ENCODE measurements at regions of chr15 and their contacts with region 1.

Region 1: DNA sequence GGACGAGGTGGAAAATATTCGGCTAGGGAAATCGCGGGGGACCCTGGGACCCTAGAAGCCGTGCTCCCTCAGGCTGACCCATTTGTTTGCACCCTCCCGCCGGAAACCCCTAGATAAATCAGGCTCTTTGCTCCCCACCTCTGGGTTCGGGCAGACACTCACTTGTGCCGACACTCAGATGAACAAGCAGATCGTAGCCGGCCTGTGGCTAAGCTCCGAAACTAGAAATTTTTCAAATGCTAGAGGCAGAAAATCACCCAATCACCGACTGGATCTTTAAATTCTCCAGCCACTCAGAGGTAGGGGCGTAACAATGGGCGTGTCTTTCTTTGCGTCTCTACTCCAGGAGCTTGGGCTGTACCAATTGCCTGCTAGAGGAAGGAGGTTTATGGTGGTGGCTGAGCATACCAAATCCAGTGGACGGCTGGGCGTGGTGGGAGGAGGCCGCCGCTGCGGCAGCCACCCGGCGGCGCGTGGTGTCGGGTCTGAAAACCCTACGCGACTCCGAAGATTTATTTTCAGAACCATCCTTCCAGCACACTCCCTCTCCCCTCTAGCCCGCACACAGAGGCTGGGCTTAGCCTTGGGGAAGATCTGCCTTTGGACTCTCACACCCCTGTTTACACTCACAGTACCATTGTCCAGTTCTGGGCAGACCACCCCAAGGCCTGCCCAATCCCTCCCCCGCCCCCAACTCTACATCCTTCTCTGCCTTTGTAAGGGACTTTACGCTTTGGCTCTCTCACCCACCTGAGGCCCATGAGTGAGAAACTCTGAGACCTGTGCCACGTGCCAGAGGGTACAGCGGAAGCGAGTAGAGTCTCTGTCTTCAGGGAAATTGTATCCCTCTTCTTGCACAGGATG is at the start of gene PIF1:
- DNase-seq: peak; percentile 93
- H3K4me3 Mint-ChIP-seq: peak within 1 kb of the TSS; percentile 82
- H3K27ac Mint-ChIP-seq: peak within 1 kb of the TSS; percentile 56
- H3K4me1 Mint-ChIP-seq: peaks cover 24% of the 10 kb centered on the region
- H3K27me3 Mint-ChIP-seq: peaks cover 4% of the 10 kb centered on the region
- total RNA-seq, gene PIF1: 23.6 to 30.2 TPM

Region 2: DNA sequence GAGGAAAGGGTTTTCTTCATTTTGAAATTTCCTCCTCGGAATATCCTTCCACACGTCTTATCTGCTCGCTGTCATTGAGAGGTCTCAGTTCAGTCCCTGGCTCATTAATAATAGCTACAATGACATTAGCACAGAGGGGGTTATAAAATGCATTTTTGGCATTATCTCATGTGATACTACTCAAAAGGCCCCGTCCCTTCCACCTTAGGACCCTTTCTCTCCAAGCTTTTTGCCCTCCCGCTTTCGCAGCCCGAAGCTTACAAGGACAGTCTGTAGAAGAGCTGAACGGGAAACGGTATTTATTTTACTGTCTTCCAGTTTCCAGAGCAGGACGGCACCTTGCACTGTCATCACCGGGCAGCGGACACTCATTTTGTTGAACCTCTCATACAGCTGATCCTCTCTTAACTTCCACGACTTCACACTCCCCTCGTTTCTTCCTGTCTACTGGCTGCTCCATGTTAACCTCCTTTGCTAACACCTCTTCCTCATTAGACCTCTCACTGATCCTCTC is 10.4 kb after region 1 on chr15:
- CTCF ChIA-PET with region 1: interaction called, 24 read pairs
- POLR2A ChIA-PET with region 1: interaction called, 6 read pairs
- intact Hi-C with region 1: loop called (anchors 1 kb)
- DNase-seq: no peak
- H3K4me3 Mint-ChIP-seq: peak overlapping the region; percentile 59
- H3K27ac Mint-ChIP-seq: peak overlapping the region; percentile 59
- H3K4me1 Mint-ChIP-seq: peaks cover 40% of the 10 kb centered on the region
- H3K27me3 Mint-ChIP-seq: no peaks in the 10 kb centered on the region

Region 3: DNA sequence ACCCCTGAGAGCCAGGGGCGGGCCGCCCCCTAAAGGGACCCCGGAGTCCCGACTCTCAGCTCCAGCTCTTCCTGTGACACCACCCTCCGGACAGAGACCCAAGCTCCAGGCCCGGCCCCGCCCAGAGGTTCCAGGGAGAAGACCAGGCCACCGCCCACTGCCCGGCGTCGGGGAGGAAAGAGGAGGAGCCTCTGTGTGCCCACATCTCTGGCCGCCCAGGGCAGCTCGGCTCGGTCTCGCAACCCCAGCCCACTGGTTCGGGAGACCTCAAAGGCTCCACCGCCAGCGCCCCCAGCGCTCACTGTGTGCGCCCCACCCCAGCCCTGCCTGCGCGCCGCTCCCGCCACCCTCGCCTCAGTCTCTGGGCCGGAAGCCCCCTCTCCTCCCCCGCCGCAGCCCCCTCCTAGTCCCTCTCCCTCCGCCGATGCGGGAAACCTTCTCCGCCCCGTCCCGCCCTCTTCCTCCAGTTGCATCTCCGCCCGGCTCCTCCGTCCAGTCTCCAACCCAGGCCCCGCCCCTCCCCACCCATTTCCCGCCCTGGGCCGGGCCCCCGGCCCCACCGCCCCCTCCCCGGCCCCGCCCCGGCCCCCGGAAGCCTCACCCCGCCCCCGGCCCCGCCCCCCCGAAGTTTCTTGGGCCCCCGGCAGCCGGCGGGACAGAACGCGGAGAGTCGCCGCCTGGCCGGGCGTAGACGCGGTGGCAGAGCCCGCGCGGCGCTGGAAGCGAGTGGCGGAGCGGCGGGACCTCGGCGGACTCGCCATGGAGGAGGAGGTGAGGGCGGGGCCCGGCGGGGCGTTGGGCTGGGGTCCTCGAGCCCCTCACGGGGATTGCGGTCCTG is 15.8 kb after region 1 on chr15 and contains the start of gene PLEKHO2:
- CTCF ChIA-PET with region 1: interaction called, 24 read pairs
- POLR2A ChIA-PET with region 1: interaction called, 6 read pairs
- intact Hi-C with region 1: loop called (anchors 2 kb)
- DNase-seq: peak; percentile 95
- H3K4me3 Mint-ChIP-seq: peak within 1 kb of the TSS; percentile 95
- H3K27ac Mint-ChIP-seq: peak within 1 kb of the TSS; percentile 84
- H3K4me1 Mint-ChIP-seq: peaks cover 60% of the 10 kb centered on the region
- H3K27me3 Mint-ChIP-seq: no peaks in the 10 kb centered on the region
- total RNA-seq, gene PLEKHO2: 15.3 to 15.6 TPM

Region 4: GRCh38 chr15:64905119-64905831 is 79.6 kb after region 1 on chr15:
- CTCF ChIA-PET with region 1: interaction called, 3 read pairs
- POLR2A ChIA-PET with region 1: no interaction called
- intact Hi-C with region 1: loop called (anchors 2 kb)
- DNase-seq: peak; percentile 88
- H3K4me3 Mint-ChIP-seq: peak overlapping the region; percentile 72
- H3K27ac Mint-ChIP-seq: peak overlapping the region; percentile 39
- H3K4me1 Mint-ChIP-seq: peaks cover 34% of the 10 kb centered on the region
- H3K27me3 Mint-ChIP-seq: no peaks in the 10 kb centered on the region